ENCODE measurements at regions of chr10 and their contacts with region 1.

Region 1: DNA sequence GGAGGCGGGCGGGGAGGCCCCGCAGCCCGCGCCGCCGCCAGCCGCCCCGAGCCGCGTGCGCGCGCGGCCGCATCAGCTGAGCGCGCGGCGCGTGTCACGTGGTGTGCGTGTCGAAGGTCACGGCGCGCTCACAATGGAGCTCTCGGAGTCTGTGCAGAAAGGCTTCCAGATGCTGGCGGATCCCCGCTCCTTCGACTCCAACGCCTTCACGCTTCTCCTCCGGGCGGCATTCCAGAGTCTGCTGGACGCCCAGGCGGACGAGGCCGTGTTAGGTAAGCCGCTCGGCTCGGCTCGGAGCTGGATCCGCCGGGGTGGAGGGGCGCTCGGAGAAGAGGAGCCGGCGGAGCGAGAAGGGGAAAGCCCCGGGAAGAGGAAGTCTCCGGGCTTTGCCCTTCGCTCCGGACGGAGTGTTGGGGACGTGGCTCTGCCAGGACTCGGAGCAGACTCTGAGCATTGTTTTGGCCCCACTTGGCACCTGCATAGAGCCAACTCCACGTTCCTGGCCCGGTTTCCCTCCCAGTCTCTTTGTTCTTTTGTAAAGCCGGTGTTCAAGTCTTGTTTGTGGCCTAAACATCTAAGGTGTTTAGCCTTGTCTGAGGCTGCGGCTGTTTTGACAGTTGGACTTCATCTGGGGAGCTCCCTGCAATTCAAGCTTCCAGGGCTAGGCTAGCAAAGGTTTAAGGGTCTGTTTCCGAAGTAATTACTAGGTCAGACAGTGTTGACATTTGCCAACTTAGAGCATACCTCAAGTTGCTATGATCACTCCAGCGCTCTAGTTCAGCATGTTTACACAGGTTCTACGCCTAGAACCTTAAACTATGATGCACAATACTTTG is at the start of gene COMMD3:
- DNase-seq: peak; percentile 86
- H3K4me3 Mint-ChIP-seq: peak within 1 kb of the TSS; percentile 96
- H3K27ac Mint-ChIP-seq: peak within 1 kb of the TSS; percentile 94
- H3K4me1 Mint-ChIP-seq: peaks cover 50% of the 10 kb centered on the region
- H3K27me3 Mint-ChIP-seq: peaks cover 3% of the 10 kb centered on the region
- total RNA-seq, gene COMMD3: 82.6 to 97.0 TPM

Region 2: GRCh38 chr10:22003079-22003913 is 313.2 kb before region 1 on chr10 and contains the start of gene DNAJC1:
- CTCF ChIA-PET with region 1: interaction called, 5 read pairs
- POLR2A ChIA-PET with region 1: interaction called, 17 read pairs
- DNase-seq: peak; percentile 98
- H3K4me3 Mint-ChIP-seq: peak within 1 kb of the TSS; percentile 96
- H3K27ac Mint-ChIP-seq: peak within 1 kb of the TSS; percentile 93
- H3K4me1 Mint-ChIP-seq: peaks cover 30% of the 10 kb centered on the region
- H3K27me3 Mint-ChIP-seq: peaks cover 9% of the 10 kb centered on the region
- total RNA-seq, gene DNAJC1: 35.7 to 38.9 TPM

Region 3: GRCh38 chr10:22210277-22210676 is 106.2 kb before region 1 on chr10:
- CTCF ChIA-PET with region 1: no interaction called
- POLR2A ChIA-PET with region 1: no interaction called
- DNase-seq: no peak
- H3K4me3 Mint-ChIP-seq: no peak overlapping the region
- H3K27ac Mint-ChIP-seq: no peak overlapping the region
- H3K4me1 Mint-ChIP-seq: no peaks in the 10 kb centered on the region
- H3K27me3 Mint-ChIP-seq: peaks cover 14% of the 10 kb centered on the region

Region 4: GRCh38 chr10:22228943-22229801 is 87.3 kb before region 1 on chr10:
- CTCF ChIA-PET with region 1: interaction called, 5 read pairs
- POLR2A ChIA-PET with region 1: interaction called, 95 read pairs
- DNase-seq: peak; percentile 83
- H3K4me3 Mint-ChIP-seq: peak overlapping the region; percentile 76
- H3K27ac Mint-ChIP-seq: peak overlapping the region; percentile 95
- H3K4me1 Mint-ChIP-seq: peaks cover 27% of the 10 kb centered on the region
- H3K27me3 Mint-ChIP-seq: peaks cover 20% of the 10 kb centered on the region

Region 5: DNA sequence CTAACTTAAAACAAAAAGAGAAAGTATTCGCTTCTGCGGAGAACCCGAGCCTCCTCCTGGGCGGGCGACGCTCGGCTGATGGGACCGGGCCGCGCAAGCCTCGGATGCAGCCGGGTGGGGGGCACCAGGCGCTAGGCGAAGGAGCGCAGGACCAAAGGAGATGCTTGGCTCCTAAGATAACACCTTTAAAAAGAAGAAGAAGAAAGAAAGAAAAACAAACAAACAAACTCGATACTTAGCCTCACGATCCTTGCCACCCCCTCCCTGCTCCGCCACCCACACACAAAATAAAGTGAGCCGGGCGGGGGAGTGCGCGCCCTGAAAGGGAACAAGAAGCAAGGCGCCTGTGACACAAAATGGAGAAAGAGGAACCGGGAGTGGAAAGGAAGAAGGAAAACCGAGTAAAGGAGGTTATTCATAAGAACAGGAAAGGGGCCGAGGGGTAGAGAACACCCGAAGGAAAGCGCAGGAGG is 64.7 kb before region 1 on chr10:
- CTCF ChIA-PET with region 1: interaction called, 3 read pairs
- POLR2A ChIA-PET with region 1: interaction called, 32 read pairs
- DNase-seq: peak; percentile 78
- H3K4me3 Mint-ChIP-seq: peak overlapping the region; percentile 88
- H3K27ac Mint-ChIP-seq: peak overlapping the region; percentile 97
- H3K4me1 Mint-ChIP-seq: peaks cover 44% of the 10 kb centered on the region
- H3K27me3 Mint-ChIP-seq: peaks cover 5% of the 10 kb centered on the region

Region 6: DNA sequence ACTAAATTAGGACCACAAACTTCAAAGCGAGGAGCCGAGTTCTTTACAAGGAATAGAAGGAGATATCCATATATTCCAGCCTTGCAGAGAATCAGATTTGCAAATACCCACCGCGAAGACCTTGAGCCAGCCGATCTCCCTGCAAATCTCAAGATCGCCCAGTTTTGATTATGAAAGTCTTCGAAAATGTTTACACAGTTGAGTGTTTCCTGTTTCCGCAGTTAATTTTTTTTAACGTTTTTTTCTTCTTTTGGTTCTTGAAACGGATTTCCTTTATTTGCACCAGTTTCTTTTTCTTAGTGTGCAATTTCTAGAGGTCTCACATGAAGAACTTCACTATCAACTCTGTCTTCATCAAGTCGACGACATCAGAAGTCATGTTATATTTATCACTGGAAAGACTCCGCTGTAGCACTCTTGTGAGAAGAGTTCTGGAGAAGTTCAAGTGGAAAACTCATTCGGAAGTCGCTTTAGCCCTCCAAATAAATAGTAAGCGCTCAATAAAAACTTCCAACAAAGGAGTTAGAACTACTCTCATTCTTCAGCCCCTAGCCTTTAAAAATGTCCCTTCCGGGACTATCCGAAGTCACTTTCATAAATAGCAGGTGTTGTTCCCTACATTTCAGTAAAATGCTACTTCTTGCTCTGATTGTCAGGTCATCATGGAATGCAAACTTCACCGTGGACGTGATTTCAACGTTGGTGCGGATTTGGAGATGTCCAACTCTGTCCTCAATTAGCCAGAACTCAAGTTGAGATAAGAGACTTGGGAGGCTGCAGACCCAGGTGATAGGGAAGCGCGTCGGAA is 16.9 kb after region 1 on chr10:
- CTCF ChIA-PET with region 1: interaction called, 3 read pairs
- POLR2A ChIA-PET with region 1: interaction called, 13 read pairs
- DNase-seq: peak; percentile 37
- H3K4me3 Mint-ChIP-seq: peak overlapping the region; percentile 71
- H3K27ac Mint-ChIP-seq: peak overlapping the region; percentile 84
- H3K4me1 Mint-ChIP-seq: peaks cover 49% of the 10 kb centered on the region
- H3K27me3 Mint-ChIP-seq: peaks cover 26% of the 10 kb centered on the region

Region 7: DNA sequence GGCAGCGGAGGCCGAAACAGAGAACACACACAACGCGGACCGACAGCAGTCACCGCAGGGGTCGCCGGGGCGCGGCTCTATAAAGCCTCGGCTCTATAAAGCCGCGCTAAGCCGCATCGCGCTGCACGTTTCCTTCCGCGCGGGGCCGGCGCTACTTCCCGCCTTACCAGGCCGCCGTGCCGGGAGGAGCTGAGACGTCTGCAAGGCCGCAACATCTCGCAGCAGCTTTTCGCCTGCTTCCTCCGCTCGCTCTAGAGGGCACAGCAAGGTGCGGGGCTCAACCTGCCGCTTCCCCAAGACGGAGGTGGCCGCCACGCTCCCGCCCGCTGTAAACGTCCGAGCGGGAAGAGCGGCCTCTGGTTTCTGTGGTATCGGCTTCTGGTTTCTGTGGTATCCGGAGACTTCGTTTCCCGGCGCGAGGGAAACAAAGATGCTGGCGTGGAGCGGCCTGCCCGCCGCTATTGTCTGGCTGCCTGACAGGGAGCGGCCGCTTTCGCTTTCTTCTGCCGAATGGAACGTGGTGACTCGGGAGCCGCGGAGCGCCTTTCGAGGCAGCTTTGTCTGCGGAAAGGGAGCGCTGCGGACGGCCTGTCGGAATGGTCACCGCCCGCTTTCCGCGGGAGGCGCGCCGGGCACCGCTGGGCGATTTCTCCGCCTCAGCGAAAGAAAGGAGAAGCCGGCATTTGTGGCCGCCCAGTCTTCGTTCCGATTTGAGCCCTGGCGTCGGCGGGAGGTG is 120.5 kb after region 1 on chr10:
- CTCF ChIA-PET with region 1: no interaction called
- POLR2A ChIA-PET with region 1: interaction called, 39 read pairs
- DNase-seq: peak; percentile 88
- H3K4me3 Mint-ChIP-seq: peak overlapping the region; percentile 92
- H3K27ac Mint-ChIP-seq: peak overlapping the region; percentile 95
- H3K4me1 Mint-ChIP-seq: peaks cover 47% of the 10 kb centered on the region
- H3K27me3 Mint-ChIP-seq: peaks cover 2% of the 10 kb centered on the region